CD4-positive, alpha-beta T cell (primary cell): ENCODE measurements at regions of chr1 and their contacts with region 1.

Region 1: DNA sequence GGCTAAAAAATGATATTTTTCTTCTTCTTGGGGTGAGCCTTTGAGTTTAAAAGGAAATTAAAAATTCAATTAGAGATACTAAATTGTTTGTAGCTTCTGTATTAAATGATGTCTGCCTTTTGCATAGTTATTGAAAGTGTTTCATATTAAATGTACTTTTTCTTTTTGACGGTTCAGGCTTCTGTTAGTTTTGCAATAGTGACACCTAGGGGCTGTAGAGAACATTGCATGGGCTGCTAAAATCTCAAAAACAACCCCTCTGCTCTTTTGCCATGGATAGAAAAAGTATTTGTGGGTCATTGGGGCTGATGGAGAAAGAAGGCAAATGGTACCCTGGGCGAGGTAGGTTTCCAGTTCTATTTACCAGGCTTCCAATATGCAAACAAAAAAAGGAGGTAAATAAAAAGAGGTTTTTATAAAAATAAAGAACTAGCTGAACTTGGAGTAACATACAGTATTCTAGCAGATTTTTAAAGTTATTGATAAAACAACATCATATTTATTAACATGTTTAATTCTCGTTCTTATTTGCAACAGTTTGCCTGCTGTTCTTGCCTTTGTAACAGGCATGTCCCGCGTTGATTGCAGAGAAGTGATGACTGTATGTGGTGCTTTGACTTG is 115.4 kb upstream of the HOOK1 start:
- DNase-seq: peak in 6 of 14 experiments; percentile 7 to 74 (median 46)
- ATAC-seq: peak; percentile 63
- H3K4me3 ChIP-seq: no peak overlapping the region
- H3K4me3 Mint-ChIP-seq: no peak overlapping the region
- H3K27ac ChIP-seq: no peak overlapping the region
- H3K27ac Mint-ChIP-seq: no peak overlapping the region
- H3K4me1 ChIP-seq: peaks cover 12% of the 10 kb centered on the region
- H3K4me1 Mint-ChIP-seq: peaks cover 13% of the 10 kb centered on the region
- H3K27me3 ChIP-seq: no peaks in the 10 kb centered on the region
- H3K27me3 Mint-ChIP-seq: no peaks in the 10 kb centered on the region
- CTCF ChIP-seq: peak; percentile 98

Region 2: DNA sequence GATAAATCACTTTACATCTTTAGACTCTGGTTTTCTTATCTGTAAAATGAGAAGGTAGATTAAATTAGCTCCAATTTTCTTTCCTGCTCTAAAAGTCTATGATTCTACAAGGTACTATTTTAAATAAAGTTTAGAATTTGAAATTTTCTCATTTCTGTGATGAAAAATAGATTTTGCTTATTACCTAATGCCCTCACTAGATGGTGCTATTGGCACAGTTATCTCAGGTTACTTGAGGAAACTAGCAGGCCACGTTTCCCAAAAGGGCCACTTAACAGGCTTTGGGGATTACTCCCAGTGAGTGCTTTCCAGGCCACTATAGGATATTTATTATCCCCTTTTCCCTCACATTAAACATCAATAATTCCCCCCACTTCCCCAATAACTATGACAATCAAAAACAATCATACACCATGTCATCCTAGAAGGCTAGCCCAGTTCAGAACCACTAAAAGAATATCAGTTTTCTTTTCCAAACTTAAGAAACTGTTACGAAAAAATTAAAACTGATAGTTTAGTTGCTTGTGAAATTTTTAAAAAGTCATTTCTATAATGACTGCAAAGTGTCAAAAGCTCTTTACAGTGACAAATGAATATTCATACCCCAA is 1183.4 kb before region 1 on chr1:
- CTCF ChIA-PET with region 1: no interaction called
- POLR2A ChIA-PET with region 1: no interaction called
- intact Hi-C with region 1: loop called (anchors 5 to 10 kb)
- DNase-seq: peak in 8 of 14 experiments; percentile 1 to 81 (median 25)
- ATAC-seq: peak; percentile 54
- H3K4me3 ChIP-seq: no peak overlapping the region
- H3K4me3 Mint-ChIP-seq: no peak overlapping the region
- H3K27ac ChIP-seq: no peak overlapping the region
- H3K27ac Mint-ChIP-seq: peak overlapping the region; percentile 25
- H3K4me1 ChIP-seq: no peaks in the 10 kb centered on the region
- H3K4me1 Mint-ChIP-seq: peaks cover 9% of the 10 kb centered on the region
- H3K27me3 ChIP-seq: no peaks in the 10 kb centered on the region
- H3K27me3 Mint-ChIP-seq: no peaks in the 10 kb centered on the region
- CTCF ChIP-seq: peak; percentile 83

Region 3: GRCh38 chr1:58652651-58653184 is 1046.6 kb before region 1 on chr1:
- CTCF ChIA-PET with region 1: no interaction called
- POLR2A ChIA-PET with region 1: no interaction called
- intact Hi-C with region 1: loop called in 1 of 2 experiments (anchors 10 kb)
- DNase-seq: peak; percentile 16 to 86 (median 42)
- ATAC-seq: peak; percentile 92
- H3K4me3 ChIP-seq: no peak overlapping the region
- H3K4me3 Mint-ChIP-seq: no peak overlapping the region
- H3K27ac ChIP-seq: no peak overlapping the region
- H3K27ac Mint-ChIP-seq: no peak overlapping the region
- H3K4me1 ChIP-seq: peaks cover 11% of the 10 kb centered on the region
- H3K4me1 Mint-ChIP-seq: peaks cover 23% of the 10 kb centered on the region
- H3K27me3 ChIP-seq: no peaks in the 10 kb centered on the region
- H3K27me3 Mint-ChIP-seq: no peaks in the 10 kb centered on the region
- CTCF ChIP-seq: peak; percentile 96

Region 4: DNA sequence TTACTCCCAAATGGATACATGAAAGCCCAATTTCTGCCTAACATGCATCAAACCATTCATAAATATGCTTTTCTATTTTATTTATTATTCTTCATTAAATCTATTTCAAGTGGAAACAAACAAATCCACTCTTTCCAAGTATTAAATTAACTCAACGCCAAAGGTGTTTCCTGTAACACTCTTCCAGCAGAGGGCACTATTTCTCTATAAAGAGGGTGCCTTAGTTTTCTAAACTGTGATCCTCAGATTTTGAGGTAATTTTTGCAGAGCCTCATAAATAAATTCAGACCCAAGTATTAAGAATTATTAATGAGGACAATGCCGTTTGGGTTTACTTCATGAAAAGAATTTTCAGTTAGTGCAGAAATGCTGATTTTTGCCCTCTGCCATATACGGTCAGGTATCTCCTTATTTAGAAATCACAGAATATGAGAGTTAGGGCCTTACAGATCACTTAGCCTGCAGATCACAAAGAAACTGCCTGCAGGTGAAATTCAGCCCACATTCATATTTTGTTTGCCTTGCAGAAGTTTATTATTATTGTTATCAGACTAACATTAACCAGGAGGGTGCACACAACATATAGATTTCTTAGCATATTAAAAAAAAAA is 959.4 kb before region 1 on chr1:
- CTCF ChIA-PET with region 1: interaction called, 7 read pairs
- POLR2A ChIA-PET with region 1: no interaction called
- intact Hi-C with region 1: loop called (anchors 1 kb)
- DNase-seq: peak in 4 of 14 experiments; percentile 42 to 78 (median 75)
- ATAC-seq: no peak
- H3K4me3 ChIP-seq: no peak overlapping the region
- H3K4me3 Mint-ChIP-seq: no peak overlapping the region
- H3K27ac ChIP-seq: no peak overlapping the region
- H3K27ac Mint-ChIP-seq: no peak overlapping the region
- H3K4me1 ChIP-seq: no peaks in the 10 kb centered on the region
- H3K4me1 Mint-ChIP-seq: no peaks in the 10 kb centered on the region
- H3K27me3 ChIP-seq: no peaks in the 10 kb centered on the region
- H3K27me3 Mint-ChIP-seq: no peaks in the 10 kb centered on the region
- CTCF ChIP-seq: peak; percentile 94

Region 5: GRCh38 chr1:59076612-59077011 is 622.7 kb before region 1 on chr1:
- CTCF ChIA-PET with region 1: no interaction called
- POLR2A ChIA-PET with region 1: no interaction called
- intact Hi-C with region 1: loop called in 1 of 2 experiments (anchors 5 kb)
- DNase-seq: no peak
- ATAC-seq: no peak
- H3K4me3 ChIP-seq: no peak overlapping the region
- H3K4me3 Mint-ChIP-seq: no peak overlapping the region
- H3K27ac ChIP-seq: no peak overlapping the region
- H3K27ac Mint-ChIP-seq: no peak overlapping the region
- H3K4me1 ChIP-seq: peaks cover 13% of the 10 kb centered on the region
- H3K4me1 Mint-ChIP-seq: peaks cover 11% of the 10 kb centered on the region
- H3K27me3 ChIP-seq: no peaks in the 10 kb centered on the region
- H3K27me3 Mint-ChIP-seq: no peaks in the 10 kb centered on the region
- CTCF ChIP-seq: peak; percentile 14

Region 6: GRCh38 chr1:59759156-59759925 is 60.0 kb after region 1 on chr1:
- CTCF ChIA-PET with region 1: interaction called, 12 read pairs
- POLR2A ChIA-PET with region 1: no interaction called
- intact Hi-C with region 1: loop called (anchors 1 kb)
- DNase-seq: peak; percentile 42 to 81 (median 62)
- ATAC-seq: peak; percentile 88
- H3K4me3 ChIP-seq: no peak overlapping the region
- H3K4me3 Mint-ChIP-seq: no peak overlapping the region
- H3K27ac ChIP-seq: no peak overlapping the region
- H3K27ac Mint-ChIP-seq: no peak overlapping the region
- H3K4me1 ChIP-seq: peaks cover 6% of the 10 kb centered on the region
- H3K4me1 Mint-ChIP-seq: peaks cover 4% of the 10 kb centered on the region
- H3K27me3 ChIP-seq: no peaks in the 10 kb centered on the region
- H3K27me3 Mint-ChIP-seq: no peaks in the 10 kb centered on the region
- CTCF ChIP-seq: peak; percentile 88